Heart left ventricle (tissue), 16 donors: ENCODE measurements at regions of chr21 and their contacts with region 1.

Region 1: GRCh38 chr21:41926117-41926806 is 27.6 kb downstream of the C2CD2 start:
- DNase-seq: no peak
- ATAC-seq: peak; percentile 39 to 79 (median 44)
- H3K4me3 ChIP-seq: peak overlapping the region in 11 of 12 donors; percentile 10 to 62 (median 47)
- H3K27ac ChIP-seq: peak overlapping the region; percentile 60 to 92 (median 85)
- H3K4me1 ChIP-seq: peaks cover 0 to 75% (median 37%) of the 10 kb centered on the region in 12 donors
- H3K27me3 ChIP-seq: no peaks in the 10 kb centered on the region
- CTCF ChIP-seq: no peak
- POLR2A ChIP-seq: no peak

Region 2: DNA sequence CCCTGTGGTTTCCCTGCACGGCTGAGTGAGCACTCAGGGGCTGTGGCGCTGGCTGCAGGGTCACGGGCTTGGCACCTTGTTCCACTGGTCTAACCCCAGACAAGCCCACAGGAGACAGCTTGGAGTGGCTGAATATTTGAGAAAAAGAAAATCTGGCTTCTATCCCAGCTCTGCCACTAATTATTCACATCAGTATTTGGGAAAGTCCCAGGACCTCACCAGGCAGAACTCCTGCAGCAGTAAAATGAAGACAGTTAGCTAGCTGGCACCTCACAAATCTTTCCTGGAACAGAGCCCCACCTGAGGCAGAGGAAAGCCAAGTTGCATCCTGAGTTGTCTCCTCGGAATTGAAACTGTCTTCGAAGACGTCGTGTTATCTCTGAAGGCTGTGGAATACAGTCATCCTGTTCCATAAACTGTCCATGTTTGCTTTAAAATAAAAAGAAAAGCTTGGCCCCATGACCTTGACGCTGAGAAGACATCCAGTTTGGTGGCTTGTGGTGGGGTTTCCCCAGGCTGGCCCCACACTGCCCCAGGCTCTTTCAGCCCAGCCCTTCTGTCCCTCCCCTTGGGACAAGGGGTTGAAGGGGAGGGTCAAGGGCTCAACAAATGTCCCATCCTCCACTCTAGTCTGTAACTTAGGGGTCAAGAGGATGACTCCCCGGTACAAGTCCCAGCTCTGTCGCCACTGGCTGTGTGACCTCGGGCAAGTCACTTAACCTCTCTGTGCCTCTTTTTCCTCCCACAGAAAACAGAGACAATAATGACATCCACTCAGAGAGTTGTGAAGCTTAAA is 324.5 kb before region 1 on chr21:
- intact Hi-C with region 1: no loop called
- DNase-seq: no peak
- ATAC-seq: no peak
- H3K4me3 ChIP-seq: no peak overlapping the region
- H3K27ac ChIP-seq: no peak overlapping the region
- H3K4me1 ChIP-seq: peaks cover 0 to 4% (median 0%) of the 10 kb centered on the region in 12 donors
- H3K27me3 ChIP-seq: peaks cover 0 to 17% (median 0%) of the 10 kb centered on the region in 9 donors
- CTCF ChIP-seq: no peak
- POLR2A ChIP-seq: no peak

Region 3: DNA sequence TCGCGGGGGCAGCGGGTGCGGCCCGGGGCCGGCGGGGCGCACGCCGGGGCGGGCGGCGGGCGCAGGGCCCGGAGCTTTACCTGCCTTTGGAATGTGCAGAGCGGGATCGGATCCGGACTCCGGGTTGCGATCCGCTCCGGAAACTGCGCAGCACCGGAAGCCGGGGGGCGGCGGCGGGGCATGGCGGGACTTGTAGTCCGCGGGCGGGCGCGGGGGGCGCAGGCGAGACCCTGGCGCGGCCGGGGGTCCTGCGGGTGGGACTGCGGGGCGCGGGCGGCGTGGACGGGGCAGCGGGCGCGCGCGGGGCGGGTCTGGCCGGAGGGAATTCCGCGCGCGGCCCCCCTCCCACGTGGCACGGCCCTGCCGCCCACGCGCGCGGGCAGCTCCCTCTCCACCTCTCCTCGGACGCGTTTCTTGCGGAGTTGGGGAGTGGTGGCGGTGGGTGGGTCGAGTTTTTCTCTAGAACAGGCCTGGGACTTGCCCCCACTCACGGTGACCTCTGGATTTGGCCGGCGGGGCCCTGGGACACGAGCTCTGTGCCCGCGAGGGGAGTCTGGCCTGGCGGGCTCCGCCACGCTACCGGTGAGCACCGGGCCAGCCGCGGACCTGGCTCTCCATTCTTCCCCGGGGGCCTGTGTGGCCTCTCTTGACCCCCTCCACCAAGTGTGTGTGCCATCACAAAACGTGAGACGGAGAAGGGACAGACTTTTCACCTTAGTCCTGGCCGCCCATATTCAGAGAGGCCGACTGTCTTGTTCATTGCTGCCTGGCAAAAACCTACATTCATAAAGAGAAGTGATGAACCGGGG is 46.9 kb before region 1 on chr21 and contains the start of gene PRDM15:
- intact Hi-C with region 1: loop called in 5 of 10 experiments (anchors 5 kb)
- DNase-seq: peak; percentile 85 to 91 (median 89)
- ATAC-seq: peak; percentile 44 to 74 (median 67)
- H3K4me3 ChIP-seq: peak within 1 kb of the TSS; percentile 74 to 99 (median 84)
- H3K27ac ChIP-seq: peak within 1 kb of the TSS; percentile 7 to 87 (median 80)
- H3K4me1 ChIP-seq: peaks cover 0 to 20% (median 12%) of the 10 kb centered on the region in 12 donors
- H3K27me3 ChIP-seq: no peaks in the 10 kb centered on the region
- CTCF ChIP-seq: no peak
- POLR2A ChIP-seq: peak in 1 of 2 donors; percentile 33
- total RNA-seq, gene PRDM15: 2.1 to 6.3 (median 2.9) TPM

Region 4: GRCh38 chr21:41884501-41885030 is 41.7 kb before region 1 on chr21:
- intact Hi-C with region 1: loop called in 5 of 10 experiments (anchors 5 kb)
- DNase-seq: no peak
- ATAC-seq: peak in 1 of 4 donors; percentile 29
- H3K4me3 ChIP-seq: no peak overlapping the region
- H3K27ac ChIP-seq: no peak overlapping the region
- H3K4me1 ChIP-seq: peaks cover 0 to 11% (median 4%) of the 10 kb centered on the region in 12 donors
- H3K27me3 ChIP-seq: no peaks in the 10 kb centered on the region
- CTCF ChIP-seq: no peak
- POLR2A ChIP-seq: no peak

Region 5: DNA sequence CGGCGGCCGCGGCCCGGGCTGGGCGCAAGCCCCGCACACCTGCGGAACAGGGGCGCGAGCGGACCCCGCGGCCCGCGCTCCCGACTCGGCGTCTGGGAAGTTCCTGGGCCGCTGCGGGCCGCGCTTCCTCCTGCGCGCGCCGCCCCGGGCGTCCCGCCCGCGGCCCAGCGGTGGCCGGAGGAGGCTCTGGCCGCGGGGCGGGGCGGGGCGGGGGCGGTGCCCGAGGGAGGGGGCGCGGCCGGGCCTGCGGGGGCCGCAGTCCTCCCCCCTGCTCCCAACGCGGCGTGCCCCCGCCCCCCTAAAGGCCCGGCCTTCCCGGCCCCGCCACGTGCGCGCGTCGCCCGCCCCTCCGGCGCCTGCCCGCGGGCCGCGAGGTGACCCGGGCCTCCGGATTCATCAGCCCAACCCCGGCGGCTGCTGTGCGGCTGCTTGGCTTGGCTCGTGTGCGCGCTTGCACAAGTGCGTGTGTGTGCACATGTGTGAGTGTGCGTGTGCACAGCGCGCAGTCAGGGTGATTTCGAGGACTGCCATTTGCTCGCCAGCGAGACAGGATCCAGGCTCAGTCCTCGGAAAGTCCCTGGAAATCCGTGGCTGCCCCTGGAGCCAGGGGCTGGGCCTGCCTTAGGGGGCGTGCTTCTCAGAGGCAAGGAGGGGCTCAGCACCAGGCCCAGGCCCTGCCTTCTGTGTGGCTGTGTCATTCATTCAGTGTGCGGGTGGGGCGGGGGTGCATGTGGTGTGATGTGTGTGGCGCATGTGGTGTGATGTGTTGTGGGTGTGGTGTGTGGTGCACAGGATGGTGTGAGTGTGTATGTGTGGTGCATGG is 27.8 kb after region 1 on chr21 and contains the start of gene C2CD2:
- intact Hi-C with region 1: loop called in 2 of 10 experiments (anchors 1 to 2 kb)
- DNase-seq: peak; percentile 69 to 88 (median 80)
- ATAC-seq: peak; percentile 39 to 82 (median 74)
- H3K4me3 ChIP-seq: peak within 1 kb of the TSS; percentile 62 to 97 (median 81)
- H3K27ac ChIP-seq: peak within 1 kb of the TSS; percentile 32 to 82 (median 70)
- H3K4me1 ChIP-seq: peaks cover 11 to 51% (median 36%) of the 10 kb centered on the region in 12 donors
- H3K27me3 ChIP-seq: no peaks in the 10 kb centered on the region
- CTCF ChIP-seq: peak in 1 of 12 donors; percentile 3
- POLR2A ChIP-seq: peak in 1 of 2 donors; percentile 26
- total RNA-seq, gene C2CD2: 3.8 to 13.9 (median 7.8) TPM